PC-9 (cell line): ENCODE measurements at regions of chr3 and their contacts with region 1.

Region 1: DNA sequence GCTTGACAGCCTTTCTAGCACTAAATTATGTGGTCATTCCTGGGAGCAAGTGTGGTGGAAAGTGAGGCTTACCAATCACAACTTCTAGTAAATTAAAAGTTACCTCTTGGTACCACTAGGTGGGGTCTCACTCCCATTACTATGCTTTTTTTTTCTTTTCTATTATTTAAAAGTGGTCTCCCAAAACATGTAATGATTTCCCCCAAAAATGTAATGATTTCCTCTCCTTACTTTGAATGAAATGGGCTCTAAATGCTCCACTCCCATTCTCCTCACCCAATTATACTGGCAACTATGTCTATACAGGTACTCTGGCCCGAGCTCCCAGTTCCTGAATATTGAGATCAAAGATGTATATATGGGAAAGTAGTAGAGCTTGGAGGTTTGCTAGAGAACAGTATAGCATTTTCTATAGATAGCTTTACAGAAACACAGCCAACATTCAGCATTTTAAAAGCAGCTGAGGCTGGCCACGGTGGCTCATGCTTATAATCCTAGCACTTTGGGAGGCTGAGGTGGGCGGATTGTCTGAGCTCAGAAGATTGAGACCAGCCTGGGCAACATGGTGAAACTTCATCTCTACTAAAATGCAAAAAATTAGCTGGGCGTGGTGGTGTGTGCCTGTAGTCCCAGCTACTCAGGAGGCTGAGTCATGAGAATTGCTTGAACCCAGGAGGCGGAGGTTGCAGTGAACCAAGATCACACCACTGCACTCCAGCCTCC is 70.9 kb downstream of the DCUN1D1 start:
- DNase-seq: no peak
- H3K4me3 ChIP-seq: no peak overlapping the region
- H3K27ac ChIP-seq: no peak overlapping the region
- H3K4me1 ChIP-seq: no peaks in the 10 kb centered on the region
- H3K27me3 ChIP-seq: no peaks in the 10 kb centered on the region
- CTCF ChIP-seq: peak; percentile 83

Region 2: GRCh38 chr3:182921665-182922355 is 12.3 kb after region 1 on chr3:
- CTCF ChIA-PET with region 1: interaction called, 3 read pairs
- POLR2A ChIA-PET with region 1: interaction called, 17 read pairs
- intact Hi-C with region 1: no loop called
- DNase-seq: no peak
- H3K4me3 ChIP-seq: no peak overlapping the region
- H3K27ac ChIP-seq: 0 out of 2 replicates have a peak overlapping the region, but pooled peaks have one; percentile 1
- H3K4me1 ChIP-seq: no peaks in the 10 kb centered on the region
- H3K27me3 ChIP-seq: no peaks in the 10 kb centered on the region
- CTCF ChIP-seq: no peak

Region 3: DNA sequence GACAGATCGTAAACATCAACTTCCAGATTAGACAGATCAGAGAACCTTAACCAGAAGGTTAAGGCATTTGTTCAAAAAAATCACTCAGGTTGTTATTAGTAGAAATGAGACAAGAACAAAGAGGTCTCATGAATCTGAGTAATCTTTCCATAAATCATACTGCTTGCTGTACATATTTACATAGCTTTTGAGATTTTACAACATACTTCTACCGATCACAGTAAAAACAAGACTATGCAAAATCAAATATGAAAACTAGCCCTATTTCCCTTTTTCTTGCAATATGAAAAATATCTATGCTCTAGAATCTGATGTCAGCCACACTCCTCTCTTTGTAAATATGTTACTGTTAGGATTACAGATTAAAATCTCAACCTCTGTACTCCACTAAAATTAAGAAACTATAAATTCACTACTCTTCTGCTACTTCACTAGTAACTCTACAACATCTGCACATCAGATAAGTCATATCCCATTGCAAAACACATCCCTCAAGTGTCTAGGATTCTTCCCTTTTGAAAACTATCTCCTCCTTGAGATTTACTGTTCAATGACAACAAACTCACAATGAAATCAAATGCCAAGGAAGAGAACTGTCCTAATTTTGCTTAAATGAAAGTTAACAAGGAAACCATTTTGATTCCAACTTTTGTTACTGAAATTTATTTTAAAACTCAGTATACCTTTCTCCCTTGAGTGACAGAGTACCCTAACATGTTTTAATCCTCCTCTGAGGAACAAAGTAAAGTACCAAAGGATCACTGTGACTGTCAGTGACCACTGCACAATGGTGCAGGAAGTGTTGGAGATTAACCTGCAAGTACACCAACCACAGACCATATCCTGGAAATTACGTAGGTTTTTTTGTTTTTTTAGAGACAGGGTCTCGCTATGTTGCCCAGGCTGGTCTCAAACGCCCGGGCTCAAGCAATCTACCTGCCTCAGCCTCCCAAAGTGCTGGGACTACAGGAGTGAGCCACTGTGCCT is 58.0 kb after region 1 on chr3:
- CTCF ChIA-PET with region 1: no interaction called
- POLR2A ChIA-PET with region 1: no interaction called
- intact Hi-C with region 1: no loop called
- DNase-seq: no peak
- H3K4me3 ChIP-seq: no peak overlapping the region
- H3K27ac ChIP-seq: peak overlapping the region; percentile 6; the same call in 1 of the 2 replicates
- H3K4me1 ChIP-seq: peaks cover 32% of the 10 kb centered on the region
- H3K27me3 ChIP-seq: no peaks in the 10 kb centered on the region
- CTCF ChIP-seq: no peak

Region 4: GRCh38 chr3:183178629-183179549 is 269.4 kb after region 1 on chr3:
- CTCF ChIA-PET with region 1: no interaction called
- POLR2A ChIA-PET with region 1: no interaction called
- intact Hi-C with region 1: loop called (anchors 5 kb)
- DNase-seq: peak; percentile 52 to 73
- H3K4me3 ChIP-seq: peak overlapping the region; percentile 71
- H3K27ac ChIP-seq: no peak overlapping the region
- H3K4me1 ChIP-seq: no peaks in the 10 kb centered on the region; the same call in 1 of the 2 replicates
- H3K27me3 ChIP-seq: no peaks in the 10 kb centered on the region
- CTCF ChIP-seq: peak; percentile 52; the same call in 1 of the 2 replicates

Region 5: DNA sequence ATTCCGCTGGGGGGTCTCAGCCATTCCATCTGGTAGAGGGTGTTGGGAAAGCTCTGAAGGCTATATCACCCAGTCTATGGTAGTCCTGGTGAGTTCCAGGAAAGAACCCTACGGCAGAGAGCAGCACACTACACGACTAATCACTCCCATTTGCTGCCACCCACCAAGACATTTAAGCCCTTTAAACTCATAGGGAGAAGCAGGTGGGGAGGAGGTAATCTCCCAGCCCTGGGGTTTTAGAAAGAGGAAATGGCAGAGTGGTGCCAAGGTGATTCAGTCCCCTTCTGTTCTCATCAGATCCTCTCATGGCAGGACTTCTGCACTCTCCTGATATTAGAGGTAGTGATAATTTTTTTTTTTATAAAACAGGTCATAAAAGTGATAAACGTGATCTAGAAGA is 1309.3 kb after region 1 on chr3:
- CTCF ChIA-PET with region 1: no interaction called
- POLR2A ChIA-PET with region 1: no interaction called
- intact Hi-C with region 1: no loop called
- DNase-seq: no peak
- H3K4me3 ChIP-seq: no peak overlapping the region
- H3K27ac ChIP-seq: no peak overlapping the region
- H3K4me1 ChIP-seq: no peaks in the 10 kb centered on the region
- H3K27me3 ChIP-seq: 0 out of 2 replicates have a peak, but pooled peaks cover 4% of the 10 kb centered on the region
- CTCF ChIP-seq: no peak